Vagina (tissue), 2 donors: ENCODE measurements at regions of chr2 and their contacts with region 1.

Region 1: DNA sequence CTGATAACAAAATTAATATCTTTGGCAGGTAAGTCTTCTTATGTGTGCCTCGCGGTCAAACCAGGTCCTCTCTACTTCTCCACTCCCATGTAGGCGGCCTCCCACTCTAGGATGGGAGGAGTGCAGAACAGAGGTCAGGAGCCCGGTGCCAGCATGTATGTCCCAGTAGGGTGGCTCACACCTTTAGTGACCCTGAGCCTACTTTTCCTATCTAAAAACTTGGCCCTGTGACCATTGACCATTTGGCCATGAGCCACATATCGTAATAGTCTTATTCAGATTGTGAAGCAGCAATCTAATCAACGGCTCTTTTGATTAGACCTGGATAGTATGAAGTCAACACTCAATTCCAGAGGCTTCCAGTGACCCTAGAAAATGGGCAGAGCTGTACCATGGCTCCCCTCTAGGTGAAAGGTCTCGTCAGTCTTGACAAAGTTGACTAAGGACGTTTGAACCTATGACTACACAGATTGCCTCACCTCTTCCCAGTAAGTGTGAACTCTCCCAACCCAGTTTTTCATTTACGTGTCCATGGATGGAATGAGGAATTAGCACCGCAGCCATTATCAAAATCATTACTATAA is 17.1 kb upstream of the FABP1 start:
- DNase-seq: no peak
- H3K4me3 ChIP-seq: no peak overlapping the region
- H3K27ac ChIP-seq: no peak overlapping the region
- H3K4me1 ChIP-seq: no peaks in the 10 kb centered on the region
- H3K27me3 ChIP-seq: no peaks in the 10 kb centered on the region
- CTCF ChIP-seq: no peak
- POLR2A ChIP-seq: no peak

Region 2: GRCh38 chr2:88003074-88003755 is 141.8 kb before region 1 on chr2:
- intact Hi-C with region 1: loop called (anchors 5 kb)
- DNase-seq: peak in 1 of 2 donors; percentile 37
- H3K4me3 ChIP-seq: no peak overlapping the region
- H3K27ac ChIP-seq: no peak overlapping the region
- H3K4me1 ChIP-seq: peaks cover 6% of the 10 kb centered on the region
- H3K27me3 ChIP-seq: no peaks in the 10 kb centered on the region
- CTCF ChIP-seq: no peak
- POLR2A ChIP-seq: no peak

Region 3: GRCh38 chr2:88121678-88122077 is 23.3 kb before region 1 on chr2:
- intact Hi-C with region 1: loop called (anchors 2 kb)
- DNase-seq: no peak
- H3K4me3 ChIP-seq: no peak overlapping the region
- H3K27ac ChIP-seq: no peak overlapping the region
- H3K4me1 ChIP-seq: no peaks in the 10 kb centered on the region
- H3K27me3 ChIP-seq: no peaks in the 10 kb centered on the region
- CTCF ChIP-seq: no peak
- POLR2A ChIP-seq: no peak

Region 4: DNA sequence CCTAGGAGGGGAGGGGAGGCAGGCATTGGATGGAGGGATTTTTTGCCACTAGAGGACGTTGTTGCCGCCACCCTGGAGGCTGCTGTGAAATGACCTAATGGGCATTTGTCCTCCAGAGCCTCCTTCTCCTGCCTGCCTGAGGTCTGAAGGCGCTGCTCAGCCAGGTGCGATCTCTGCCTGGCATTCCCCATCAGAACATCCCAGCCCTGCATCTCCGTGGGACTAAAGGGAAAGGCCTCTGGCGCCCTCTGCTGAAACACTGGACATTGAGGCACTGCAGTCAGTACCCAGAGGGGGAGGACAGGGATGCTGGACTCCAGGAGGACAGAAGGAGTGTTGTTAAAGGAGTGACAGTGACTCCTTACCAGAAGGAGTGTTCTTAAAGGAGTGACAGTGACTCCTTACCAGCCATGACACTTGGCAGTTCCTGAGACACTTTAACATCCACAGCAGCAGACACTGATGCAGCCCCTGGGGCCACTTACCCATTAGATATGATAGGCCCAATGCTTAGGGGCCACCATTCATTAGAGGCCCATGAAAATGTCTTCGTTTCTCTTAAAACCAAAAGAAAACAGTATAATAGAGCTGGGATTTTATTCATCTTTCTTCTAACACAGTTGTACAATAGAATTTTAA is 42.2 kb after region 1 on chr2:
- intact Hi-C with region 1: no loop called
- DNase-seq: no peak
- H3K4me3 ChIP-seq: no peak overlapping the region
- H3K27ac ChIP-seq: no peak overlapping the region
- H3K4me1 ChIP-seq: no peaks in the 10 kb centered on the region
- H3K27me3 ChIP-seq: no peaks in the 10 kb centered on the region
- CTCF ChIP-seq: peak in 2 of 3 experiments; percentile 19 to 24
- POLR2A ChIP-seq: no peak